Colonic mucosa (tissue), 4 donors: ENCODE measurements at regions of chr4 and their contacts with region 1.

Region 1: DNA sequence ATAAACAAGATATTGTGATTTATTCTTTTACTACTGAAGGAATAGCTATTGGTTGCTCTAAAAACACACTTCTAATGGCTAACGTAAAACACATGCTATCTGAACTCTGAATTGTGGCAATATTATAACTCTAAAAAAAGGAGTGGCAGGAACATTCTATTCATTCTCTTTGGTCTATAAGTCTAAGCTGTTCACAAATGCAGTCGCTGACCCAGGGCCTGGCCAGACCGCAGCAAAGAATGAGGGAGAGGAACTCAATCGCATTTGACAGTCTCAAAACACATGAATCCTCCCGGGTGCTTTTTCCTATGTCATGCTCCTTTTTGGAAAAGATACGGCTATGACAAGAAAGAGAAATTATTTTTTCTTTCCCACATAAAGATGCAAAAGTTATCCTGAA is 651.6 kb upstream of the PITX2 start:
- DNase-seq: no peak
- H3K4me3 ChIP-seq: no peak overlapping the region
- H3K27ac ChIP-seq: no peak overlapping the region
- H3K4me1 ChIP-seq: no peaks in the 10 kb centered on the region
- H3K27me3 ChIP-seq: no peaks in the 10 kb centered on the region
- CTCF ChIP-seq: no peak

Region 2: DNA sequence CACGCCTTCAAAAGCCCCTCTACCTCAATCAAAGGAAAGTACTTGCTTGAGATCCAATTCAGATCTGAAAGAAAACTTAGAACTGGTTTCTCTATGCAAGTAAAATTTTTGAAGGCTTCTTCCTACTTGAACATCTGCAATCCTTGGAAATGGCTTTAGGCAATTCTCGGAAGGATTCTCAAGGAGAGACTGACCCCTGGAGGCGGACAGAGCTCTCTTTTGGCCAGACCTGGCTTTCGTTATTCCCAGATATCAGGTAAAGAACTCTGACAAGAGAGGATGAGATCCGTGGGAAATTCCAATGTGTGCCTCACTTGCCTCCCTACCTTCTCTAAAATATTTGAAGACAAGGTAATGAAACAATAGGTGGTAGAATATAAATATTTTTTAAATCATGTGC is 200.5 kb after region 1 on chr4:
- intact Hi-C with region 1: loop called (anchors 10 kb)
- DNase-seq: peak; percentile 58
- H3K4me3 ChIP-seq: no peak overlapping the region
- H3K27ac ChIP-seq: no peak overlapping the region
- H3K4me1 ChIP-seq: no peaks in the 10 kb centered on the region
- H3K27me3 ChIP-seq: no peaks in the 10 kb centered on the region
- CTCF ChIP-seq: peak; percentile 42